Activated CD8-positive, alpha-beta T cell treated with anti-CD3 and anti-CD28 coated beads for 36 hours (primary cell): ENCODE measurements at regions of chr1 and their contacts with region 1.

Region 1: DNA sequence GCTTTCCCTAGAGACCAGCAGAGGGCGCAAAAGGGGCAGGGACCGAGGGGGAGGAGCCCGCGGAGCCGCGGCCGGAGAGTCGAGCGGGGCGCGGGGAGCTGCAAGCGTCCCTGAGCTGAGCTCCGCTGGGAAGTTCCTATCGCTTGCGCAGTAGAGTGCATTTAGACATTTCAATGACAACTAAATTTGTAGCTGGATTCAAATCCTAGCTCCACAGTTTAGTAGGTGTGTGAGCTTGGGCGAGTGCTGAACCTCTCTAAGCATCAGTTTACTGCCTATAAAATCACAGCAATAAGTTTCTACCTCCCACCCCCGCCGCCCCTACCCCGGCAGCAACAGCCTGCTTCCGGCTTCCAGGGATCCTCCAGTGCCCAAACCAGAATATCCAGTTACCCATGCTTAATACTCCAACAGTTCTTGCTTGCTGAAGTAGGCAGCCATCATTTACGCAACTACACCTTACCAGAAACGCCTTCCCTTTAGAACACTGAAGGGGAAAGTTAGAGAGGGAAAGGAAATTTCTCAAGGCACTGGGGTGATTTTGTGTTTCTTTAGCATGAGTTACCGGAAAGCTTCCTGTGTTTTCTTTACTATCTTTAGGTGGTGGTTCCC is 9.1 kb downstream of the TLR5 start:
- DNase-seq: peak; percentile 84
- ATAC-seq: peak; percentile 94
- H3K4me3 Mint-ChIP-seq: peak overlapping the region; percentile 14
- H3K27ac Mint-ChIP-seq: no peak overlapping the region
- H3K4me1 Mint-ChIP-seq: peaks cover 14% of the 10 kb centered on the region
- H3K27me3 Mint-ChIP-seq: peaks cover 13% of the 10 kb centered on the region
- CTCF ChIP-seq: peak; percentile 31

Region 2: GRCh38 chr1:223114871-223115270 is 19.1 kb before region 1 on chr1:
- CTCF ChIA-PET with region 1: interaction called, 111 read pairs
- POLR2A ChIA-PET with region 1: no interaction called
- intact Hi-C with region 1: no loop called
- DNase-seq: no peak
- ATAC-seq: no peak
- H3K4me3 Mint-ChIP-seq: no peak overlapping the region
- H3K27ac Mint-ChIP-seq: no peak overlapping the region
- H3K4me1 Mint-ChIP-seq: peaks cover 12% of the 10 kb centered on the region
- H3K27me3 Mint-ChIP-seq: no peaks in the 10 kb centered on the region
- CTCF ChIP-seq: no peak

Region 3: DNA sequence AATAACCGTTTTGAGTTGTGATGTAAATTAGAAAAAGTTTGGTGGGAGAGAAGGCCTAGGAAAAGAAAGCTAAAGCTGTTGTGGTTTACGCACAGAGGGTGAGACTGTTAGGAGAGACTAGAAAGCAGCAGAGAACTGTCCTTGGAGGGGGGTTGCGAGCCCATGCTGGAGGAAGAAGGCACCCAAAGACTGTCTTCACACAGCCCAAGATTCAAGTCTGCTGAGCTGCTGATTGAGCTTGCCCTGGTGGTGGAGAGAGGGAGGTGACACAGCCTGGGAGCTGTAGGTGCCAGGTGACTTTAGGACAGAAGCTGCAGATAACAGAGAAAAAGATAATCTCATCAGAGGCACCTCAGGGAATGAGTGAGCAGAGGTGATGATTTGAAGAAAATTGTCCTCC is 27.4 kb after region 1 on chr1:
- CTCF ChIA-PET with region 1: interaction called, 14 read pairs
- POLR2A ChIA-PET with region 1: no interaction called
- intact Hi-C with region 1: no loop called
- DNase-seq: no peak
- ATAC-seq: peak; percentile 30
- H3K4me3 Mint-ChIP-seq: no peak overlapping the region
- H3K27ac Mint-ChIP-seq: no peak overlapping the region
- H3K4me1 Mint-ChIP-seq: no peaks in the 10 kb centered on the region
- H3K27me3 Mint-ChIP-seq: peaks cover 2% of the 10 kb centered on the region
- CTCF ChIP-seq: no peak

Region 4: GRCh38 chr1:223207293-223208066 is 73.5 kb after region 1 on chr1:
- CTCF ChIA-PET with region 1: interaction called, 11 read pairs
- POLR2A ChIA-PET with region 1: no interaction called
- intact Hi-C with region 1: no loop called
- DNase-seq: no peak
- ATAC-seq: no peak
- H3K4me3 Mint-ChIP-seq: no peak overlapping the region
- H3K27ac Mint-ChIP-seq: no peak overlapping the region
- H3K4me1 Mint-ChIP-seq: no peaks in the 10 kb centered on the region
- H3K27me3 Mint-ChIP-seq: no peaks in the 10 kb centered on the region
- CTCF ChIP-seq: no peak

Region 5: GRCh38 chr1:223256034-223256433 is 122.1 kb after region 1 on chr1:
- CTCF ChIA-PET with region 1: interaction called, 11 read pairs
- POLR2A ChIA-PET with region 1: no interaction called
- intact Hi-C with region 1: no loop called
- DNase-seq: no peak
- ATAC-seq: no peak
- H3K4me3 Mint-ChIP-seq: no peak overlapping the region
- H3K27ac Mint-ChIP-seq: no peak overlapping the region
- H3K4me1 Mint-ChIP-seq: no peaks in the 10 kb centered on the region
- H3K27me3 Mint-ChIP-seq: no peaks in the 10 kb centered on the region
- CTCF ChIP-seq: no peak

Region 6: GRCh38 chr1:223628233-223629125 is 494.5 kb after region 1 on chr1:
- CTCF ChIA-PET with region 1: interaction called, 10 read pairs
- POLR2A ChIA-PET with region 1: no interaction called
- intact Hi-C with region 1: no loop called
- DNase-seq: peak; percentile 65
- ATAC-seq: peak; percentile 74
- H3K4me3 Mint-ChIP-seq: no peak overlapping the region
- H3K27ac Mint-ChIP-seq: no peak overlapping the region
- H3K4me1 Mint-ChIP-seq: no peaks in the 10 kb centered on the region
- H3K27me3 Mint-ChIP-seq: peaks cover 4% of the 10 kb centered on the region
- CTCF ChIP-seq: peak; percentile 86